ENCODE measurements at regions of chr3 and their contacts with region 1.

Region 1: DNA sequence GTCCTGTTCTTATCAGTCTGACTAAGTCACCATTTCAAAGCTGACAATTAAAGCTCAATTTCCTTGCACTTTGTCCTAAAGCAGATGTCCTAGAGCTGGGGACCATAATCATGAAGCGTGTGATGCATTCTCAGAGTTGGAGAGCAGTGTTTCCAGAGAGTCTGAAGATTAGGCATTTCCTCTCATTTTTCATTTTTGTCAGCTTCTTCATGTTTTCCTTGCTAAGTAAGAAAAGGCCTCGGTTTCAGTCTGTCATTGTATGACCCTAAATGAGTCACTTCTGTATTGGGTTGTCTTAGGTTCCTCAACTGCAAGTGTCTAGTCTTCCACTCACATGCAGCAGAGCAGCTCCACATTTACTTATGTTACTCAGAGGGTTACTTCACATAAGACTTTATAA is 257.2 kb upstream of the TPRG1 start:
- DNase-seq: peak; percentile 42
- ATAC-seq: peak; percentile 82
- H3K4me3 Mint-ChIP-seq: no peak overlapping the region
- H3K27ac Mint-ChIP-seq: peak overlapping the region; percentile 90
- H3K4me1 Mint-ChIP-seq: peaks cover 46% of the 10 kb centered on the region
- H3K27me3 Mint-ChIP-seq: peaks cover 3% of the 10 kb centered on the region

Region 2: GRCh38 chr3:187745201-187746058 is 1169.1 kb before region 1 on chr3 and contains the start of gene BCL6:
- CTCF ChIA-PET with region 1: interaction called, 18 read pairs
- POLR2A ChIA-PET with region 1: interaction called, 13 read pairs
- intact Hi-C with region 1: loop called in 1 of 2 experiments (anchors 1 kb)
- DNase-seq: peak; percentile 92
- ATAC-seq: peak; percentile 50
- H3K4me3 Mint-ChIP-seq: peak within 1 kb of the TSS; percentile 91
- H3K27ac Mint-ChIP-seq: peak within 1 kb of the TSS; percentile 99
- H3K4me1 Mint-ChIP-seq: peaks cover 63% of the 10 kb centered on the region
- H3K27me3 Mint-ChIP-seq: no peaks in the 10 kb centered on the region
- total RNA-seq, gene BCL6: 42.9 to 52.8 TPM

Region 3: GRCh38 chr3:188061133-188061532 is 853.4 kb before region 1 on chr3:
- CTCF ChIA-PET with region 1: no interaction called
- POLR2A ChIA-PET with region 1: no interaction called
- intact Hi-C with region 1: loop called in 1 of 2 experiments (anchors 1 kb)
- DNase-seq: peak; percentile 76
- ATAC-seq: peak; percentile 98
- H3K4me3 Mint-ChIP-seq: peak overlapping the region; percentile 25
- H3K27ac Mint-ChIP-seq: peak overlapping the region; percentile 77
- H3K4me1 Mint-ChIP-seq: peaks cover 35% of the 10 kb centered on the region
- H3K27me3 Mint-ChIP-seq: no peaks in the 10 kb centered on the region

Region 4: GRCh38 chr3:188286087-188286513 is 628.5 kb before region 1 on chr3:
- CTCF ChIA-PET with region 1: interaction called, 4 read pairs
- POLR2A ChIA-PET with region 1: interaction called, 5 read pairs
- intact Hi-C with region 1: loop called in 1 of 2 experiments (anchors 1 kb)
- DNase-seq: peak; percentile 29
- ATAC-seq: no peak
- H3K4me3 Mint-ChIP-seq: no peak overlapping the region
- H3K27ac Mint-ChIP-seq: peak overlapping the region; percentile 72
- H3K4me1 Mint-ChIP-seq: peaks cover 55% of the 10 kb centered on the region
- H3K27me3 Mint-ChIP-seq: no peaks in the 10 kb centered on the region

Region 5: GRCh38 chr3:188683032-188683521 is 231.5 kb before region 1 on chr3:
- CTCF ChIA-PET with region 1: no interaction called
- POLR2A ChIA-PET with region 1: no interaction called
- intact Hi-C with region 1: loop called (anchors 1 kb)
- DNase-seq: peak; percentile 69
- ATAC-seq: peak; percentile 97
- H3K4me3 Mint-ChIP-seq: no peak overlapping the region
- H3K27ac Mint-ChIP-seq: no peak overlapping the region
- H3K4me1 Mint-ChIP-seq: peaks cover 41% of the 10 kb centered on the region
- H3K27me3 Mint-ChIP-seq: no peaks in the 10 kb centered on the region

Region 6: DNA sequence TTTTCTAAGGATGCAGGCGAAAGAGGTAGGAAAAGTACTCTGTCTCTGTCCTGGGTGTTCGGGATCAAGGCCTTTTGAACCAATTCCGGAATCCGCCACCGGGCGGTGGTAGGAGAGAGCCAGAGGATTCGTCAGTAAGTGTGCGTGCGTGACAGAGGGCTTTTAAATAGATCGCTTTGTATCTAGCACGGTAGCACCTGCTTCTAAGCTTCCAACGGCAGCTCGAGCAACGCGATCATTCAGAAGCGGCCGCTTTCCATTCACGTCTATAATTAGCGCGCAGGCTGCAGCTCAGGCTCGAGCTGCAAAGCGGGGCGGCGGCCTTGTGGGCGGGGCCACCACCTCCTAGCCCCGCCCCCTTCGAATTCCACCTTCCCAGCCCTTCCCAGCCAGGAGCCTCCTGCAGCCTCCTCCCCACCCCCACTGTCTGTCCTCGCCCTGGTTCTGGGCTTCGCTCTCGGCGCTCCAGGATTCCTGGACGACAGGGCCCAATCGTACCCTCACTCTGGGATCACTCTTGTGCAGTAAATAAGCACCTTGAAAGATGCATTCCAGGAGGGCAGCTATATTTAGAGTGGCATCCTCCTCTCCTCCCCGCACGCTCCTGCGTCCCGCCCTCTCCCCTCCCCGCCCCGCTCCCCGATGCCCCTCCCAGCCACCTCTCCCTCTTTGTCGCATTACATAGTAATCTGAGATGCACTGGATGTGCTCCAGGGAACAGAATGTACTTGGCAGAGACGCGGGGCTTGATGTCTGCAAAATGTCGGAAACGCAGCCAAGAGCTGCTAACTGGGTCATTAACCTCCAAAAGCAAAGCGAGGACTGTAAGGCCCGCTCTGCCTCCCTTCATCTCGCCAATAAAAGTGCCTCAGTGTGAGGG is 33.1 kb after region 1 on chr3:
- CTCF ChIA-PET with region 1: interaction called, 26 read pairs
- POLR2A ChIA-PET with region 1: interaction called, 3 read pairs
- intact Hi-C with region 1: loop called (anchors 1 to 2 kb)
- DNase-seq: peak; percentile 63
- ATAC-seq: peak; percentile 28
- H3K4me3 Mint-ChIP-seq: peak overlapping the region; percentile 16
- H3K27ac Mint-ChIP-seq: no peak overlapping the region
- H3K4me1 Mint-ChIP-seq: peaks cover 39% of the 10 kb centered on the region
- H3K27me3 Mint-ChIP-seq: peaks cover 13% of the 10 kb centered on the region

Region 7: DNA sequence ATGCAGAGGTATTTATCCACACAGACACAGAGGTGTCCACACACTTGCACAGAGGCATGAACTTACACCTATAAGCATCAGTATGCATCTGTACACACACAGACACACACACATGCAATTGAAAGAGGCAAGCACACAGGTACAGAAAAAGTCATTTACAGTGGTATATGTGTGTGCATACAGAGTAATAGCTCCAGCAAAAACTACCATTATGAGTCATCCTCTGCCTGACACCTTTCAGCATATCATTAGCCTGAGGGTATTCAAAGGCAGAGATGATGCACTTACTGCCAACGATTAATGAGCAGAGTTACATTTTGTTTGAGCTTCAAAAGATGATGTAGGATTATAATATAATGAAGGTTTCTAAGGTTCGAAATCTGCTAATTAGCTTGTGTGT is 156.9 kb after region 1 on chr3:
- CTCF ChIA-PET with region 1: no interaction called
- POLR2A ChIA-PET with region 1: no interaction called
- intact Hi-C with region 1: no loop called
- DNase-seq: peak; percentile 6
- ATAC-seq: peak; percentile 100
- H3K4me3 Mint-ChIP-seq: no peak overlapping the region
- H3K27ac Mint-ChIP-seq: no peak overlapping the region
- H3K4me1 Mint-ChIP-seq: peaks cover 3% of the 10 kb centered on the region
- H3K27me3 Mint-ChIP-seq: no peaks in the 10 kb centered on the region

Region 8: DNA sequence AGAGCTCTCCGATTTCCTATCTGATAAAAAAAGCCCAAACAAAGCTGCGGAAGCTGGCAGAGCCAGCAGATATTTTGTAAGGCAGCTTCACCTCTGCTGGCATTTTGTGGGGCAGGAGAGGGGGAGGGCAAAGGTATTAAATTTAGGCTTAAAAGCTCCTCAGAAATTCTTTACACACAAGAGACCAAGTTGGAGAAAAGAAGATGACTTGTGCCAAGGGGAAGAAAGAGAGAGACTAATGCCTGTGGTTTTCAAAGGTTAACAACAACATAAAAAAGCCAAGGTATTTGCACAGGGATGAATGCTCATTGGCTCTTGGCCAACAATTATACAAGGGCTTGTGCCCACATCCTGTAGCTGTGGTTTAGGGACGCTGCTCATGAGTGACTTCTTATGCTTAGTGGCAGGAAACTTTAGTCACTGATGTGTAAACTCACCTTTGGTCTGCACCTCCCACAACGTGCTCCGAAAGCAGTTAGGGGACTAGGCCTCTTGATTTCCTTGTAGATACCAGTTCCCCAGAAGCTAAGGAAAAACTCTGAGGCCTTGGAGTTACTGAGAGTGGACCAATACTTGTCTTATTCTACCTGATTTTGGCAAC is 410.1 kb after region 1 on chr3:
- CTCF ChIA-PET with region 1: no interaction called
- POLR2A ChIA-PET with region 1: no interaction called
- intact Hi-C with region 1: loop called in 1 of 2 experiments (anchors 5 kb)
- DNase-seq: peak; percentile 91
- ATAC-seq: peak; percentile 96
- H3K4me3 Mint-ChIP-seq: peak overlapping the region; percentile 49
- H3K27ac Mint-ChIP-seq: peak overlapping the region; percentile 96
- H3K4me1 Mint-ChIP-seq: peaks cover 67% of the 10 kb centered on the region
- H3K27me3 Mint-ChIP-seq: no peaks in the 10 kb centered on the region

Measured in activated CD4-positive, alpha-beta T cell treated with anti-CD3 and anti-CD28 coated beads for 36 hours (primary cell).